Breast epithelium (tissue), 4 donors: ENCODE measurements at regions of chr14 and their contacts with region 1.

Region 1: DNA sequence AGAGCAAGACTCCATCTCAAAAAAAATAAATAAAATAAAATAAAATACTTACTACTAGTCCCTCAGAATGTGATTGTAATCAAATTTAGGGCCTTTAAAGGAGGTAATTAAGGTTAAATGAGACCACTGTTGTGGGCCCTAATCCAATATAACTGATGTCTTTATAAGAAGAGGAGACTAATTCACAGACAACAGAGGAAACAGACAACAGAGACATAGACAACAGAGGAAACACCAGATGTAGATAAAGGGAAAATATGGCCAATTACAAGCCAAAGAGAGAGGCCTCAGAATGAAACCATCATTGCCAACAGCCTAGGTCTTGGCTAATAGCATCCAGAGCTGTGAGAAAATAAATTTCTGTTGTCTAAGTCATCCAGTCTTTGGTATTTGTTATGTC is 669.0 kb upstream of the FOXG1 start:
- DNase-seq: no peak
- H3K4me3 ChIP-seq: no peak overlapping the region
- H3K27ac ChIP-seq: no peak overlapping the region
- H3K4me1 ChIP-seq: no peaks in the 10 kb centered on the region
- H3K27me3 ChIP-seq: no peaks in the 10 kb centered on the region
- CTCF ChIP-seq: no peak
- POLR2A ChIP-seq: no peak

Region 2: GRCh38 chr14:28142400-28143015 is 44.9 kb after region 1 on chr14:
- intact Hi-C with region 1: loop called (anchors 2 kb)
- DNase-seq: no peak
- H3K4me3 ChIP-seq: no peak overlapping the region
- H3K27ac ChIP-seq: no peak overlapping the region
- H3K4me1 ChIP-seq: no peaks in the 10 kb centered on the region
- H3K27me3 ChIP-seq: no peaks in the 10 kb centered on the region
- CTCF ChIP-seq: no peak
- POLR2A ChIP-seq: no peak

Region 3: DNA sequence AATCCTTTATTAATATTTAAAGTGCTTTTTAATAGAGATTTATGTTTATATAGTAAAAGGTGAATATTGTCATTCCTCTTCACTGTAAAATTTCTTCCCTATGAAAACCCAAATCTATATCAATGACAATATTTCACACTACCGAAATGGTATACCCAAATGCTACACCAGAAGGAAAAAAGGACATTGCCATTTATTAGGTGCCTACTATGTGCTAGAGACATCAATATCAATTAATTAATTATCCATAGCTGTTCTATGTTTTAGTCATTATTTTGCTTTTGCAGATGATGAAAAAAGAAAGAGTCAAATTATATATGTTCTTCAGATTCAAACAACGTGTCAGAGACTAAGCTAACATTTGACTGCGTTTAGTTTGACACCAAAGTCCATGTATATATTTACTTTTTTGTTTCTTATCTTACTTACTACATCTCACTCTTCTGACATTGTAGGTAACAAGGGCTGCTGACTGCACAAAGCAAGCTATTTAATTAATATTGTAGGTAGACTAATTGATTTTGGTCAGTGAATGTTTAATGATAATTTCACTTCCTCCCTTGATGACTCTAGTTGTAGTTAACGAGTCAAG is 55.0 kb after region 1 on chr14:
- intact Hi-C with region 1: no loop called
- DNase-seq: no peak
- H3K4me3 ChIP-seq: no peak overlapping the region
- H3K27ac ChIP-seq: no peak overlapping the region
- H3K4me1 ChIP-seq: no peaks in the 10 kb centered on the region
- H3K27me3 ChIP-seq: no peaks in the 10 kb centered on the region
- CTCF ChIP-seq: no peak
- POLR2A ChIP-seq: no peak